ENCODE measurements at regions of chr1 and their contacts with region 1.

Region 1: DNA sequence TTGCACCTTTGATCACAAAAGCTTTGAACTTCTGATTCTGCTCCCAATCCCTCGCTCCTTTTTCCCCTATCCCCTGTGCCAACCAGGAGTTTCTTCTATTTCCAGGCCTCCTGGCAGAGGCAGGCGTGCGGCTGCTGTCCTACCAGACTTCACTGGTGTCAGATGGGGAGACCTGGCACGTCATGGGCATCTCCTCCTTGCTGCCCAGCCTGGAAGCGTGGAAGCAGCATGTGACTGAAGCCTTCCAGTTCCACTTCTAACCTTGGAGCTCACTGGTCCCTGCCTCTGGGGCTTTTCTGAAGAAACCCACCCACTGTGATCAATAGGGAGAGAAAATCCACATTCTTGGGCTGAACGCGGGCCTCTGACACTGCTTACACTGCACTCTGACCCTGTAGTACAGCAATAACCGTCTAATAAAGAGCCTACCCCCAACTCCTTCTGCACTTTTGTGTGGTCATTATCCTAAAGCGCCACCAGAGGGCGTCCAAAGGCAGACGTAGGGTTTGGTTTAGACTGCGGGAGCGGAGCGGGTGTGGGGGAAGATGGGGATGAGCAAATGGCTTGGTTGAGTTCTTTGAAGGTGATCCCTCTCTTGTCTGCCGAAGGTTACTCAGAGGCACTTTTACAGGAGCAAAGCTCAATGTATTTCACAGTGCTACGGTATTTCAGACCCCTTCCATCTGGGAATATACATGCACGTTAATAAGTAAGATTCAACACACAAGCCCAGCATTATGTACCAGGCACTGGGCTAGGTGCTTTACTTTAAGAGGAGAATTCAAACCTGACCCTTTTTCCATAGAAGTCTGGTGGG is 24.7 kb downstream of the HMGCS2 start:
- DNase-seq: no peak
- H3K4me3 ChIP-seq: no peak overlapping the region
- CTCF ChIP-seq: peak; percentile 86

Region 2: DNA sequence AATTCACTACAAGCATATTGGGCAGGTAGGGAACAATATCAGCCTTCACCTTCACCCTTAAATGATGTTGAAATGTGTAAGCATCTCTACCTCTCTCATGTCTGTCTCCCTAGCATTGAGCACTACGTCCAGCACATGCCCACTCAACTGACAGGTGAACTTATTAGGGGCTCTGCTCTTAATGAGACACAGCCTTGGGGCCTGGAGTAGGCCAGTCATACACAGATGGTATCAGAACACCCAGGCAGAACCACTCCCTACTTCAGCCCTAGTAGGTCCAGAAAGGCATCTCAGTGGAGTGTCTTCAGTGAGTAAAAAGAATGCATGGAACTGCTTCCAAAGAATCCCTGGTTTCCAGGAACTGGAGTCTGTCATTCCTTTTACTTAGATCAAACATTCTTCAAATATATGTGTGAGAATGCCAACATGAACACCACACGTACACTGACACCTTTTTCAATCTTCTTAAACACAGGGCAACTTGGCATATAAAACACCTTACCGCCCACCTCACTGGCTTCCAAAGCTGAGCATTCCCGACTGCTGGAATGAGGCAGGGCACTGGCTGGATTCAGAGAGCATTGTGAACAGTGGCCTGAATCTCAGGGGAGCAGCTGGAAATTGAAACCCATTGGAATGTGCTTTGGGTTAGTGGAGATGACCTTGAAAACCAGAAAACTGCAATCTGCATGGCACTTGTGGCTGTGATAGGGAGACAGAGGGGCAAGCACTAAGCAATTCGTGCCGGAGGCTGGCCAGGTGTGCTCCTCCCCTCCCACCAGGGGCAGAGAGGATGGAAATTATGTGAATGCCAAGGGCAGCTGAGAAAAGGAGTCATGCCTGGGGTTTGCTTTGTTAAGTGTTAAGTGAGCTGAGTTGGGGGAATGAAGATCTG is 261.2 kb before region 1 on chr1:
- CTCF ChIA-PET with region 1: no interaction called
- POLR2A ChIA-PET with region 1: no interaction called
- DNase-seq: no peak
- H3K4me3 ChIP-seq: no peak overlapping the region
- CTCF ChIP-seq: no peak

Region 3: DNA sequence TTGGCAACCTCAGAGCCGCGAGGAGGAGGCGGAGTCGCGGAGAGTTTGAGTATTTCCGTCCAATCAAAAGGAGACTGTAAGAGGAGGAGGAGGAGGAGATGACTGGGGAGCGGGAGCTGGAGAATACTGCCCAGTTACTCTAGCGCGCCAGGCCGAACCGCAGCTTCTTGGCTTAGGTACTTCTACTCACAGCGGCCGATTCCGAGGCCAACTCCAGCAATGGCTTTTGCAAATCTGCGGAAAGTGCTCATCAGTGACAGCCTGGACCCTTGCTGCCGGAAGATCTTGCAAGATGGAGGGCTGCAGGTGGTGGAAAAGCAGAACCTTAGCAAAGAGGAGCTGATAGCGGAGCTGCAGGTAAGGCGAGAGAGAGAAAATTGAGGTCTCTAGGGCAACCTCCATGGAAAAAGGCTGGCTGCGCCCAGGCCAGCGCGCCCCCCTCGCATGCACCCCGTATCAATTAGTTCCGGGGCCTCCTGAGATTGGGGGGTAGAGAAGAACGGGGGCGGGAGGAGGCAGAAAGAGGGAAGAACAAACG is 32.1 kb before region 1 on chr1 and contains the start of gene PHGDH:
- CTCF ChIA-PET with region 1: interaction called, 22 read pairs
- POLR2A ChIA-PET with region 1: interaction called, 3 read pairs
- DNase-seq: peak; percentile 52
- H3K4me3 ChIP-seq: peak within 1 kb of the TSS; percentile 92
- CTCF ChIP-seq: no peak

Region 4: GRCh38 chr1:119732465-119733168 is 11.4 kb before region 1 on chr1:
- CTCF ChIA-PET with region 1: interaction called, 62 read pairs
- POLR2A ChIA-PET with region 1: no interaction called
- DNase-seq: no peak
- H3K4me3 ChIP-seq: no peak overlapping the region
- CTCF ChIP-seq: no peak

Region 5: GRCh38 chr1:119758584-119758983 is 14.6 kb after region 1 on chr1:
- CTCF ChIA-PET with region 1: interaction called, 77 read pairs
- POLR2A ChIA-PET with region 1: no interaction called
- DNase-seq: no peak
- H3K4me3 ChIP-seq: no peak overlapping the region
- CTCF ChIP-seq: no peak

Region 6: GRCh38 chr1:119840745-119841144 is 96.8 kb after region 1 on chr1:
- CTCF ChIA-PET with region 1: no interaction called
- POLR2A ChIA-PET with region 1: no interaction called
- DNase-seq: no peak
- H3K4me3 ChIP-seq: no peak overlapping the region
- CTCF ChIP-seq: no peak

Region 7: GRCh38 chr1:119987112-119987511 is 243.1 kb after region 1 on chr1:
- CTCF ChIA-PET with region 1: no interaction called
- POLR2A ChIA-PET with region 1: no interaction called
- DNase-seq: peak; percentile 90
- H3K4me3 ChIP-seq: no peak overlapping the region
- CTCF ChIP-seq: no peak